ENCODE measurements at regions of chr7 and their contacts with region 1.

Region 1: DNA sequence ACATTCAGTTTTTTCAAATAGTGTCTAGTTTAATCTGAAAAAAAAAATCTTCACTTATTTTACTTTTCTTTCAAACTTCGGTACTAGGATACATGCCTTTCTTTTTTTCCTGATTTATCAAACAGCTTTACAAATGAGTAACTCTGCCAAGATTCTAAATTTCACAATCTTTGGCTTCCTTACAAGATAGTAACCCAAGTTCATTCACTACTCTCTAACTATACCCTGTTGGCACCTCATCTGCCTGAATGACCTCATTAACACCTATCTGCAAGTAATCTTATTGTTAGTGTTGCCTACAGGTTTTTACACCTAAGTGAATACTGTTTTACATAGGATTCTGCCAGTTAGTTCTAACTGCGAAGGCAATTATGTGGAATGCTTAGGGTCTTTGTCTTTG is 159.8 kb downstream of the FOXP2 start:
- DNase-seq: no peak
- ATAC-seq: peak in 1 of 4 donors; percentile 50
- H3K4me3 ChIP-seq: no peak overlapping the region
- H3K27ac ChIP-seq: no peak overlapping the region
- H3K4me1 ChIP-seq: no peaks in the 10 kb centered on the region
- H3K27me3 ChIP-seq: no peaks in the 10 kb centered on the region
- CTCF ChIP-seq: no peak
- POLR2A ChIP-seq: no peak

Region 2: GRCh38 chr7:114502454-114503254 is 71.7 kb before region 1 on chr7:
- intact Hi-C with region 1: loop called in 1 of 10 experiments (anchors 5 kb)
- DNase-seq: no peak
- ATAC-seq: no peak
- H3K4me3 ChIP-seq: no peak overlapping the region
- H3K27ac ChIP-seq: peak overlapping the region in 2 of 12 donors; percentile 1 to 2
- H3K4me1 ChIP-seq: peaks cover 0 to 2% (median 0%) of the 10 kb centered on the region in 12 donors
- H3K27me3 ChIP-seq: no peaks in the 10 kb centered on the region
- CTCF ChIP-seq: no peak
- POLR2A ChIP-seq: no peak

Region 3: GRCh38 chr7:115475761-115476385 is 901.5 kb after region 1 on chr7:
- intact Hi-C with region 1: no loop called
- DNase-seq: peak in 1 of 5 donors; percentile 8
- ATAC-seq: peak in 3 of 4 donors; percentile 59 to 71 (median 71)
- H3K4me3 ChIP-seq: no peak overlapping the region
- H3K27ac ChIP-seq: no peak overlapping the region
- H3K4me1 ChIP-seq: peaks cover 0 to 11% (median 0%) of the 10 kb centered on the region in 12 donors
- H3K27me3 ChIP-seq: peaks cover 0 to 26% (median 11%) of the 10 kb centered on the region in 9 donors
- CTCF ChIP-seq: peak in 8 of 12 donors; percentile 12 to 52 (median 33)
- POLR2A ChIP-seq: no peak

Measured in heart left ventricle (tissue), 16 donors.